Dorsolateral prefrontal cortex (tissue), 120 donors: ENCODE measurements at regions of chr11 and their contacts with region 1.

Region 1: GRCh38 chr11:46006418-46007070 is 84.1 kb downstream of the LARGE2 start:
- DNase-seq: peak in 2 of 10 donors; percentile 22 to 33
- H3K4me3 ChIP-seq: no peak overlapping the region
- H3K27ac ChIP-seq: no peak overlapping the region
- H3K27me3 ChIP-seq: no peaks in the 10 kb centered on the region
- CTCF ChIP-seq: peak; percentile 62 to 99 (median 83)

Region 2: DNA sequence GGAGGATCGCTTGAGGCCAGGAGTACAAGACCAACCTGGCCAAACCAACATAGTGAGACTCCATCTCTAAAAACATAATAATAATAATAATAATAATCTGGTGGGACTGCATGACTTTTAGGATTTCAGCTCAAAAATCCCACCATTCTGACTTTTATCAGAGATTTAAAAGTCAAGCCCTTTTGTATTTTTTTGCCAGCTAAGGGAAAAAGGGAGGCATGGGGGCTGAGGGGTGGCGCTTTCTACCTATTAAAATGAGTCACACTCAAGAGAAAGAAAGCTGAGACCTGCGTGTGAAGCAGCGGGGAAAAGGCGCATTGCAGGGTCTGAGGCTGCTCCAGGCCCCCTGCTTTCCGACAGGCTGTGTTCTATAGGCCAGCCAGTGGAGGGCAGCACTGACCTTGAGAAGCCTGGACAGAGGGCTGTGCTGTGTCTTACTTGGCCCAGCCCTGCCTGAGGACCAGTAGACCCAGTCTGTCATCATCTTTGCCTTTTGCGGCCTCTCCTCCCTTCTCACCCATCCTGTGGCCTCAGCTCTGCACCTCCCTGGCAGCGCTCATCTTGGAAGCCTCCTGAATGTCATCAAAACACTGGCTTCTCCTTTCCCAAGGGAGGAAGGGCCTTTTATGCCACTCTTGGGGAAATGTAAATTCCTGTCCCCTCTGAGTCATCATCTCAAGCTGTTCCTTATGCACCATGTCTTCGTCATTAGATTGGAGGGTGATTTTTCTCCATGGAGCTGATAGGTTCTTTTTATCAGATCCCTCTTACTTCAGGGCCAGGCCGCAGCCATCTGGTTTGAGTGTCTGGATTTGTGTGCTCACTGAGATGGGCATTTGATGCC is 133.8 kb before region 1 on chr11:
- intact Hi-C with region 1: loop called in 1 of 2 experiments (anchors 5 kb)
- DNase-seq: peak; percentile 53 to 82 (median 74)
- H3K4me3 ChIP-seq: no peak overlapping the region
- H3K27ac ChIP-seq: peak overlapping the region in 55 of 59 donors; percentile 15 to 85 (median 66)
- H3K27me3 ChIP-seq: no peaks in the 10 kb centered on the region
- CTCF ChIP-seq: peak; percentile 23 to 92 (median 82)

Region 3: DNA sequence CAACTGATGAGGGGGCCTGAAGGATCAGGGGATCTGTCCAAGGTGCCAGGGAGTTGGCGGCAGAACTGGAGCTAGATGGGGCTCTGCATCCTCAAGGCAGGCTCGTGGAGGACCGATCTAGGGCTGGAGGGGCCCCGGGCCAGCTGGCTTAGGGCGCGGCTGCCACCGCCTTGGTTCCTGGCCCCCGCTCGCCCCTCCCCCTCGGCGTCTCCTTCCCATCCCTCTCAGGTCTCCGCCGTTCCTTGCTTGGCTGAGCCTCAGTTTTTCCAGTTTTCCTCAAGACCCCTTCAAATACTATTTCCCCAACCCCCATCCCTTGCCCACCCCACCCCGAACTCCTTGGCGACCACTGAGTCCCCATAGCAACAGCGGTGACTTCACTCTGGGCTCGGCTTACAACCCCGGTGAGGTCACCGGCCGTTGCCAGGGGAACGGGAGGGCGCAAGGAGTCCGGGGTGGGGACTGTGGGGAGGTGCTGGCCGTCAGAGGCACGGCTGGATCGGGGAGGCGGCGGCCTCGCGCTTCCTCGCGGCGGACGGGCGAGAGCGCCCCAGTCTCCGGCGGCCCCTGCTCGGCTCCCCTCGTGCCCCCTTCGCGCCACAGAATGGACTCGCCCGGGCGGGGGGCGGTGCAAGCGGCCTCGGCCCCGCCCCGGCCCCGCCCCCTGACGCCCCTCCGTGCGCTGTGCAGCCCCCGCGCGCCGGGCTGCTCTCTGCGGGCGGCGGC is 106.9 kb before region 1 on chr11:
- intact Hi-C with region 1: loop called in 1 of 2 experiments (anchors 5 kb)
- DNase-seq: peak; percentile 83 to 97 (median 94)
- H3K4me3 ChIP-seq: peak overlapping the region; percentile 34 to 93 (median 79)
- H3K27ac ChIP-seq: peak overlapping the region; percentile 41 to 100 (median 97)
- H3K27me3 ChIP-seq: no peaks in the 10 kb centered on the region
- CTCF ChIP-seq: peak in 15 of 56 donors; percentile 4 to 34 (median 13)

Region 4: DNA sequence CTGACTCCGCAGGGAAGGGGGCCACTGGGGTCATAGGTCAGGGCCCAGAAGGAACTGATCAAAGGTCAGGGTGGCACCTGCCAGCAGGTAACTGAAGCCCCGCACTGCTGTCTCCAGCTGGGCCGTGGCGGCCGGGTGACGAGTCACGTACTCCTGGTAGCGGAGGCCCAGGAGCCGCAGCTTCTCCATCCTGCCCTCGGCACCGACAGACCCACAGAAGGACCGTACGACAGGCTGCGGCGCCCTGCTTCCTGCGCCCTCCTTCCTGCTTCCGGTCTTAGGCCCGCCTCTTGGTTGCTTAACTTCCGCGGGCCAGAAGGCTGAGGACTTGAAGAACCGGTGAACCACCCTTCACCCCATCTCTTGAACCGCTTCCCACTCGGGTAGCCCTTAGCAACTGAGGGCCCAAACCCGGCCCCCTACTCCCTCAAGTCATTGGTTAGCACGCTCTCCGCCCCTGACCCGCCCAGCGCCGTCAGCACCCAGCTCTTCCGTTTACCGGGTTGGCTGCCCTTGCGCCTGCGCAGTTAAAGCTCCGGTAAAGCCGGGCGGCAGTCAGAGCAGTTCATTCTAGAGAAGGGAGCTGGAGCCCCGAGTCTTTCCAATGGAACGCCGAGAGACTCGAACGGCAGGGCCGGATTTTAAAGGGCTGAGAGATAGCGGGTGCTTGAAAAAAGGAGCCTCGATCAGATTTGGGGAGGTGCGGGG is 88.8 kb before region 1 on chr11 and contains the start of gene PEX16:
- intact Hi-C with region 1: loop called in 1 of 2 experiments (anchors 5 kb)
- DNase-seq: peak; percentile 93 to 97 (median 96)
- H3K4me3 ChIP-seq: peak within 1 kb of the TSS; percentile 55 to 100 (median 96)
- H3K27ac ChIP-seq: peak within 1 kb of the TSS; percentile 31 to 97 (median 92)
- H3K27me3 ChIP-seq: peaks cover 0 to 17% (median 10%) of the 10 kb centered on the region in 45 donors
- CTCF ChIP-seq: peak in 17 of 56 donors; percentile 6 to 58 (median 27)
- total RNA-seq, gene PEX16: 26.7 to 59.7 (median 43.8) TPM

Region 5: DNA sequence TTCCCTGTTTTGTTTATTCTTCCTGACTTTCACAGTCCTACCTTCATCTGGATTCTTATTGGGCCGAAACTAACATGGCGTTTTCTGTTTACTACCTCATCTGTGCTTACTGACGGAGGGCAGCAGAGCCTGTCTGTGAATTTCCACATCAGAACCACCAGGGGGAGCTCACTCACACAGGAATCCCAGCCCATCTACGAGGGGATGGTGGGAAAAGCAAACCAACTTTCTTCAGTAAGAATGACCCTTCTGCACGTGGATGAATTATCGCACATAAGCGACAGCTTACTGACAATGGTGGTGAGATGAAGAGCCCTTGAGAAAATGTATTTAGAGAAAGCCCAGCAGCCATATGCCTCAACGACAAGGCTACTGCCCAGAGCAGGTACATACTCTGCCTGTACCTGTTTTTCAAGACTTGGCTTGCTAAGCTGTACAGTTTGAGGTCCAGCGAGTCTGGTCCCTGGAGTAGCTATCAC is 41.6 kb before region 1 on chr11:
- intact Hi-C with region 1: loop called (anchors 1 to 5 kb)
- DNase-seq: peak in 8 of 10 donors; percentile 50 to 80 (median 66)
- H3K4me3 ChIP-seq: peak overlapping the region in 3 of 59 donors; percentile 6 to 22 (median 10)
- H3K27ac ChIP-seq: peak overlapping the region in 47 of 59 donors; percentile 1 to 76 (median 58)
- H3K27me3 ChIP-seq: no peaks in the 10 kb centered on the region
- CTCF ChIP-seq: peak; percentile 66 to 97 (median 93)

Region 6: DNA sequence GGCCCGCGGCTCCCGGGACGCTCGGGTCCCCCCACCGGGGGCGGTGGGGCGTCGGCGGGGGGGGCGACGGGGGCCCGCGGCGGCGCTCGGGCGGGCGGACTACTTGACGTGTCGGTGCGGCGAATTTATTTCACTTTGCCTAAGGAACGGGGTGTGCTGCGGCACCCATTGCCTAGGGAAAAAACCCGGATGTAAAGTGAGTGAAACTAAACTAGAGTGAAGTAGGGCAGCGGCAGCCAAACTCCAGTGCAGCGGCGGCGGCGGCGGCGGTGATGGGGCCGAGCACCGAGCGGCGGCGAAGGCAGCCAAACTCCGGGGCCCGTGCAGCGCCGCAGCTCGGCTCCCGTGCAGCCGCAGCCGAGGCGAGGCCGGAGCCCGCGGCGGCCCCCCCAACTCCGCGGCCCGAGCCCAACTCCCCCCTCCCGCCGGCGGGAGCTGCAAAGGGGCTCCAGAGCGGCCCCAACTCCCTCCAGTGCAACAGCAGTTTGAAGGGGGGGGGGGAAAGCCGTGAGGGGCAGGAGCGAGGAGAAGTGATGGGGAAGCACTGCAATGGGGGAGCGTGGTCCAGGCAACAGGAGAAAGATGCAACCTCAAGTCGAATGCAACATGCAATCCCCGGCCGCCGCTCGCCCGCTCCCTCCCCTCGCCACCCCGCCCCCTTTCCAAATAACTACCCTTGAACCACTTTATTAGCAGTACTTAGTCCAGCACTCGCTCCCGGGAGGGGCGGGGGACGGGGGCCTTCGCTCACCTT is 115.4 kb after region 1 on chr11:
- intact Hi-C with region 1: loop called (anchors 5 kb)
- DNase-seq: peak; percentile 55 to 79 (median 71)
- H3K4me3 ChIP-seq: peak overlapping the region; percentile 59 to 89 (median 76)
- H3K27ac ChIP-seq: peak overlapping the region; percentile 79 to 99 (median 94)
- H3K27me3 ChIP-seq: no peaks in the 10 kb centered on the region
- CTCF ChIP-seq: peak in 4 of 56 donors; percentile 5 to 19 (median 15)

Region 7: GRCh38 chr11:46127150-46127638 is 120.7 kb after region 1 on chr11:
- intact Hi-C with region 1: loop called (anchors 5 kb)
- DNase-seq: no peak
- H3K4me3 ChIP-seq: no peak overlapping the region
- H3K27ac ChIP-seq: no peak overlapping the region
- H3K27me3 ChIP-seq: no peaks in the 10 kb centered on the region
- CTCF ChIP-seq: peak in 2 of 56 donors; percentile 14 to 20